GM10248 (cell line): ENCODE measurements at regions of chr15 and their contacts with region 1.

Region 1: GRCh38 chr15:63752075-63752684 is 81.6 kb downstream of the HERC1 start:
- DNase-seq: peak; percentile 55
- CTCF ChIP-seq: peak; percentile 60

Region 2: DNA sequence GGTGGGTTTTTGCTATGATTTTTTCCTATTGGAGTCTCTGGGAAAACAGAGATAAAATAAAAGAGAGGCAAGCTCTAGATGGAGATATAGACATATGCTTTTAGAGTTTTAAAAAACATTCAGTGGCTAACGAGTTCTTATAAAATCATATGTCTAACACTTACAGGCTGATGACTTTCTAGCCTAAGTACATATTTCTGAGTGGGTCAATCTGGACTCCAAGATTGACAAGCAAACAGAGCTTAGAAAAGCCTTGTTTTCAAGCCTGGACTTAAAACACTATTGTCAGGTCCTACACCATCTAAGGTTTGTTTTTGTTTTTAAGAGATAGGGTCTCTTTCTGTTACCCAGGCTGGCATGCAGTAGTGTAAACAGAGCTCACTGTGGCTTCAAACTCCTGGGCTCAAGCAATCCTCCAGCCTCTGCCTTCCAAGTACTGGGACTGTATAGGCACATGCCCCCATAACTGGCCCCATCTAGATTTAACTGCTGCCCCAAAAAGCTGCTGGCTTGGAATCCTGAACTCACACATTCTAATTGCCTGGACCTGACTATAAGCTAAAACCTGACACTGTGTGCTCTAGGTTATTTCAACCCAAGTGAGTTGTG is 68.7 kb before region 1 on chr15:
- CTCF ChIA-PET with region 1: no interaction called
- POLR2A ChIA-PET with region 1: no interaction called
- DNase-seq: no peak
- CTCF ChIP-seq: no peak

Region 3: GRCh38 chr15:63763476-63764123 is 11.4 kb after region 1 on chr15:
- CTCF ChIA-PET with region 1: interaction called, 34 read pairs
- POLR2A ChIA-PET with region 1: no interaction called
- DNase-seq: peak; percentile 28
- CTCF ChIP-seq: no peak

Region 4: DNA sequence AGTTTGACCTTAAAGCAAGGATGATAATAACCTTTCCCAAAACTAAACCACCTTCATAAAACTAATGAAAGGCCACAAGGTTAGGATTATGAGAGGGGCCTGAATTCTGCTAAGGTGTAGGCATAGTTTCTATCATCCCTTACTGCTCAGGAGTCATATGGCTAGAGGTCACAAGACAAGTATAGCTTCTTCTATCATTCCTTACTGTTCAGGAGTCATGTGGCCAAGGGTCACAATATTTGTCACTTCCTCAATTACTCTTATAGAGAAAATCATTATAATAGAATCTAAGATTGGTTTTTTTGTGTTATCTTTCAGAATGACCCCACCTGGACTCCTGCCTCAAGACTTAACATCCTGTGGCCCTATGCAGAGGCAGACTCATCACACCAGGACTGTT is 44.9 kb after region 1 on chr15:
- CTCF ChIA-PET with region 1: no interaction called
- POLR2A ChIA-PET with region 1: no interaction called
- DNase-seq: no peak
- CTCF ChIP-seq: no peak

Region 5: DNA sequence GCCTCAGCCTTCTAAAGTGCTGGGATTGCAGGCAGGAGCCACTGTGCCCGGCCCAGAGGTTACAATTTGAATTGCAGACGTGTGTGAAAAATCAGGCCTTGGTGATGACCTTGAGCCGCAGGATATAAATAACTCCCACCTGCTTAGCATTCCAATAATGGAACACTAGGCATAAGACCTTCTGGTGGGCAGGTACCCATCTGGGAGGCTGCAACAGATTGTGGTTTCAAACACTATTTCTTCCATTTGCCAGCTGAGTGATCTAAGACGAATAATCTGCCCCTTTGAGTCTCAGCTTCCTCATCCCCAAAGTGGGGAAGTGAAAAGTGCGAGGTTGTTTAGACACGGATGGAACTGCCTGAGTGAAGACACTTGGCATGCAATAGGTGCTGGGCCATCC is 129.3 kb after region 1 on chr15:
- CTCF ChIA-PET with region 1: interaction called, 28 read pairs
- POLR2A ChIA-PET with region 1: no interaction called
- DNase-seq: no peak
- CTCF ChIP-seq: no peak

Region 6: DNA sequence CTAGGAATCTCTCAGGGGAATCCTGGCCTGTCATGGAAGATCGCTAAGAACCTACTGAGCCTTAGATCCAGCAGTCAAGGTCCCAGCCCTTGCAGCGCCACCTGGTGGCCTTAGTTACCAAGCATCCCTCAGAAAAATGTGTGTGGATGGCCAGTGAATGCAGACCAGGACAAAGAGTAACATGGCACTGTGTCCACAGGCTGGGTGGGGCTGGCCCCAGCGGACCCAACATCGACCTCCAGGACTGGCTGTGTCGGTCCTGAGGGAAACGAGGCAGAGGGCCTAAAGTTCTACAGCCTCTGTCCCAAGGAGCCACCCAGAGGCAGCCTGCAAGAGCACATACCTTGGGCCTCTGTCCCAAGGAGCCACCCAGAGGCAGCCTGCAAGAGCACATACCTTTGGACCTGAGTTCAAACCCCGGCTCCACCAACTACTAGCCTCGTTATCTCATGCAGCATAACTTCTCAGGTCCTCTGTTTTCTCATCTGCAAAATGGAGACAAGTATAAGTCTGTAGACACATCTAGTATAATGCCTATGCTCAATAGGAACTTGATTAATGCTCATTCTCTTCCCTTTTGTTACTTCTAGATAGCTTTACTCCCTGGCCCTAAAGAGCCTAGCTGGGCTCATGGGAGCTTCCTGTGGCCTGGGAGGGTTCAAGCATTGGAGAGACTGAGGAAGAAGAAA is 139.0 kb after region 1 on chr15:
- CTCF ChIA-PET with region 1: interaction called, 40 read pairs
- POLR2A ChIA-PET with region 1: no interaction called
- DNase-seq: peak; percentile 69
- CTCF ChIP-seq: peak; percentile 87

Region 7: GRCh38 chr15:63986751-63987341 is 234.7 kb after region 1 on chr15:
- CTCF ChIA-PET with region 1: interaction called, 12 read pairs
- POLR2A ChIA-PET with region 1: no interaction called
- DNase-seq: peak; percentile 67
- CTCF ChIP-seq: no peak